Heart right ventricle (tissue), 16 donors: ENCODE measurements at regions of chr11 and their contacts with region 1.

Region 1: GRCh38 chr11:75323609-75324008 is 27.9 kb downstream of the ARRB1 start:
- DNase-seq: no peak
- ATAC-seq: peak in 1 of 8 donors; percentile 33
- H3K4me3 ChIP-seq: no peak overlapping the region
- H3K27ac ChIP-seq: peak overlapping the region in 1 of 10 donors; percentile 15
- H3K4me1 ChIP-seq: peaks cover 14 to 67% (median 45%) of the 10 kb centered on the region in 9 donors
- H3K27me3 ChIP-seq: no peaks in the 10 kb centered on the region
- CTCF ChIP-seq: no peak

Region 2: GRCh38 chr11:75286826-75287465 is 36.7 kb before region 1 on chr11:
- intact Hi-C with region 1: loop called in 2 of 10 experiments (anchors 5 kb)
- DNase-seq: no peak
- ATAC-seq: no peak
- H3K4me3 ChIP-seq: no peak overlapping the region
- H3K27ac ChIP-seq: no peak overlapping the region
- H3K4me1 ChIP-seq: peaks cover 0 to 9% (median 0%) of the 10 kb centered on the region in 9 donors
- H3K27me3 ChIP-seq: no peaks in the 10 kb centered on the region
- CTCF ChIP-seq: no peak

Region 3: GRCh38 chr11:76074148-76075095 is 750.8 kb after region 1 on chr11:
- intact Hi-C with region 1: no loop called
- DNase-seq: no peak
- ATAC-seq: peak in 7 of 8 donors; percentile 17 to 63 (median 47)
- H3K4me3 ChIP-seq: no peak overlapping the region
- H3K27ac ChIP-seq: peak overlapping the region in 7 of 10 donors; percentile 1 to 72 (median 10)
- H3K4me1 ChIP-seq: peaks cover 0 to 51% (median 39%) of the 10 kb centered on the region in 9 donors
- H3K27me3 ChIP-seq: no peaks in the 10 kb centered on the region
- CTCF ChIP-seq: no peak